CD4-positive, alpha-beta T cell (primary cell): ENCODE measurements at regions of chr14 and their contacts with region 1.

Region 1: GRCh38 chr14:103910262-103910935 is 17.9 kb upstream of the TDRD9 start:
- DNase-seq: peak; percentile 57 to 86 (median 68)
- ATAC-seq: peak; percentile 72
- H3K4me3 ChIP-seq: peak overlapping the region; percentile 33
- H3K4me3 Mint-ChIP-seq: peak overlapping the region; percentile 78
- H3K27ac ChIP-seq: peak overlapping the region in 1 of 2 donors; percentile 62
- H3K27ac Mint-ChIP-seq: peak overlapping the region; percentile 86
- H3K4me1 ChIP-seq: peaks cover 24% of the 10 kb centered on the region
- H3K4me1 Mint-ChIP-seq: peaks cover 27% of the 10 kb centered on the region
- H3K27me3 ChIP-seq: no peaks in the 10 kb centered on the region
- H3K27me3 Mint-ChIP-seq: no peaks in the 10 kb centered on the region
- CTCF ChIP-seq: peak; percentile 94

Region 2: GRCh38 chr14:103576371-103577024 is 333.9 kb before region 1 on chr14:
- CTCF ChIA-PET with region 1: no interaction called
- POLR2A ChIA-PET with region 1: no interaction called
- intact Hi-C with region 1: loop called in 1 of 2 experiments (anchors 2 kb)
- DNase-seq: no peak
- ATAC-seq: no peak
- H3K4me3 ChIP-seq: no peak overlapping the region
- H3K4me3 Mint-ChIP-seq: no peak overlapping the region
- H3K27ac ChIP-seq: no peak overlapping the region
- H3K27ac Mint-ChIP-seq: no peak overlapping the region
- H3K4me1 ChIP-seq: no peaks in the 10 kb centered on the region
- H3K4me1 Mint-ChIP-seq: no peaks in the 10 kb centered on the region
- H3K27me3 ChIP-seq: no peaks in the 10 kb centered on the region
- H3K27me3 Mint-ChIP-seq: no peaks in the 10 kb centered on the region
- CTCF ChIP-seq: no peak

Region 3: DNA sequence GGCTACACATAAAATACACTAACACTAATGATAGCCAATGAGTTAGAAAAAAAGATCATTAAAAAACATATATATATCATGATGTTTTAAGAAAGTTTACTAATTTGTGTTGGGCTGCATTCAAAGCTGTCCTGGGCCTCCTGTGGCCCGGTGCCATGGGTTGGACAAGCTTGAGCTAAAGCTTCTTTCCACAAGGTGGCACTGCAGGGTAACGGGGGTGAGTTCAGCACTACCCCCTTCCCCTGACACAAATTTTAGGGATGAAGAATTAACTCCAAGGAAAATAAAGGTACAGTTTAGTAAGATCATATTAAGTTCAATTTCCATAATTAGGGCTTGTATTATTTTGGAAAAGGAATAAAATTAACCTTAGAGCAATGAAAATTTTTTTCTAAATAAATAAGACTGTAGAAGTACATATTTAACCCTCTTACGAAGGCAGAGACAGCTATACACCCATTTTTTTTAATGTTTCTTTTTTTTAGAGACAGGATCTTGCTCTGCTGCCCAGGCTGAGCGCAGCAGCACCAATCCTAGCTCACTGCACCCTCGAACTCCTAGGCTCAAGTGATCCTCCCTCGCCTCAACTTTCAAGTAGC is 101.9 kb before region 1 on chr14:
- CTCF ChIA-PET with region 1: interaction called, 34 read pairs
- POLR2A ChIA-PET with region 1: interaction called, 10 read pairs
- intact Hi-C with region 1: loop called (anchors 1 kb)
- DNase-seq: peak; percentile 45 to 82 (median 59)
- ATAC-seq: peak; percentile 88
- H3K4me3 ChIP-seq: no peak overlapping the region
- H3K4me3 Mint-ChIP-seq: no peak overlapping the region
- H3K27ac ChIP-seq: no peak overlapping the region
- H3K27ac Mint-ChIP-seq: no peak overlapping the region
- H3K4me1 ChIP-seq: no peaks in the 10 kb centered on the region
- H3K4me1 Mint-ChIP-seq: peaks cover 8% of the 10 kb centered on the region
- H3K27me3 ChIP-seq: no peaks in the 10 kb centered on the region
- H3K27me3 Mint-ChIP-seq: no peaks in the 10 kb centered on the region
- CTCF ChIP-seq: peak; percentile 84

Region 4: GRCh38 chr14:103889313-103890051 is 20.9 kb before region 1 on chr14:
- CTCF ChIA-PET with region 1: no interaction called
- POLR2A ChIA-PET with region 1: no interaction called
- intact Hi-C with region 1: no loop called
- DNase-seq: no peak
- ATAC-seq: no peak
- H3K4me3 ChIP-seq: no peak overlapping the region
- H3K4me3 Mint-ChIP-seq: no peak overlapping the region
- H3K27ac ChIP-seq: no peak overlapping the region
- H3K27ac Mint-ChIP-seq: no peak overlapping the region
- H3K4me1 ChIP-seq: no peaks in the 10 kb centered on the region
- H3K4me1 Mint-ChIP-seq: no peaks in the 10 kb centered on the region
- H3K27me3 ChIP-seq: no peaks in the 10 kb centered on the region
- H3K27me3 Mint-ChIP-seq: no peaks in the 10 kb centered on the region
- CTCF ChIP-seq: no peak

Region 5: DNA sequence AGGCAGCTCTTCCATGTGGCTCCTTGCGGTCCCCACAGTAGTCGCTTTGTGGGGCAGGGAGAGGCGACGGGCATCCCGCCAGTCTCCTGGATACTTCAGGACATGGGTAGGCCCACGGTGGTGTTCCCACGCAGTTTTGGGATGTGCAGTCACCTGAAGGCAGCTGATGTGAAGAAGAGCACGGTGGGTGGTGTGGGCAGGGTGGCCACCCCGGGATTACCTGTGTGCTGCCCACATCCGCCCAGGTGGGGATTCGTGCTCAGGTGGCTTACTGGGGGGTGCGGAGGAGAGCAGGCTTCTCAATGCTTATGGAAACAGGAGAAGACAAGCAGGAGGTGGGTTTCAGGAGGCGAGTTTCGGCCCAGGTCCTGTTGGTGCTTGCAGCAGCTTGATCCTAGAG is 10.6 kb before region 1 on chr14:
- CTCF ChIA-PET with region 1: interaction called, 27 read pairs
- POLR2A ChIA-PET with region 1: interaction called, 3 read pairs
- intact Hi-C with region 1: no loop called
- DNase-seq: no peak
- ATAC-seq: no peak
- H3K4me3 ChIP-seq: no peak overlapping the region
- H3K4me3 Mint-ChIP-seq: no peak overlapping the region
- H3K27ac ChIP-seq: no peak overlapping the region
- H3K27ac Mint-ChIP-seq: no peak overlapping the region
- H3K4me1 ChIP-seq: peaks cover 5% of the 10 kb centered on the region
- H3K4me1 Mint-ChIP-seq: no peaks in the 10 kb centered on the region
- H3K27me3 ChIP-seq: no peaks in the 10 kb centered on the region
- H3K27me3 Mint-ChIP-seq: no peaks in the 10 kb centered on the region
- CTCF ChIP-seq: no peak

Region 6: GRCh38 chr14:103984196-103984595 is 73.8 kb after region 1 on chr14:
- CTCF ChIA-PET with region 1: no interaction called
- POLR2A ChIA-PET with region 1: no interaction called
- intact Hi-C with region 1: no loop called
- DNase-seq: no peak
- ATAC-seq: no peak
- H3K4me3 ChIP-seq: no peak overlapping the region
- H3K4me3 Mint-ChIP-seq: no peak overlapping the region
- H3K27ac ChIP-seq: no peak overlapping the region
- H3K27ac Mint-ChIP-seq: no peak overlapping the region
- H3K4me1 ChIP-seq: no peaks in the 10 kb centered on the region
- H3K4me1 Mint-ChIP-seq: no peaks in the 10 kb centered on the region
- H3K27me3 ChIP-seq: peaks cover 1% of the 10 kb centered on the region in 2 experiments
- H3K27me3 Mint-ChIP-seq: peaks cover 30% of the 10 kb centered on the region
- CTCF ChIP-seq: no peak